Dorsolateral prefrontal cortex (tissue), 120 donors: ENCODE measurements at regions of chr10 and their contacts with region 1.

Region 1: DNA sequence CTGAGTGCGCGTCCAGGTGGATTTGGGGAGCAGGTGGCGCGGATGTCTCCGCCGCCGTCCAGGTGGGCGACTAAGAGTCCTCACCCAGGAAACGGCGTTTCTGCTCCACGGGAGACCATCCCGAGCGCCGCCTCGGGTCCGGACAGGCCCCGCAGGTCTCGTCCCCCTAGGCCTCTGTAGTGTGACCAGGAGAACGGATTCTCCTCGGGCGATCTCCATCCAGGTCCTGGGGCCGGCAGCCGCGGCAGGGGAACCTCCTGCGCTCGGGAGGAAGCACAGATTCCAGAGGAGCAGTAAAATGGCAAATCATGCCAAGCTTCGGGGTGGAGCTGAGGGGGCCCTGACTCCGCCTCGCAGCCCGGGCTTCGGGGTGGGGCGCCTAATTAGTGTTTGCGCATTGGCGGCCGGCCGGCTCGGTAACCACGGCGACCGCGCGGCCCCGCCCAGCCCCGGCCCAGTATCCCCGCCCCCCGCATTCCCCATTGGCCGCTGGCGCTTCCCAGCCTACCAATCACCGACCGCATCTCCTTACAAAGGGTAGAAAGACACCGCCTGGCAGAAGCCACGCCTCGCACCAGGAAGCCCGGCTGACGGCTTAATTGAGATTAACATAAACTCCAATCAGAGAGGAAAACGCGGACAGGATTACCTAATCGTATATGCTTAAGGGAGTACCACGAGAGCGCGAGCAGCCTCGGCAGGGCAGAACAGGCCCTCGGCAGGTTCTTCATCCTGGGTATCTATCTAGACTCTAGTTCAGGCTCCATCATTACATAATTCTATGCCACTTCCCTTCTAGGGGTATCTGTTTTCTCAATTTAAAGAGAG is 168.6 kb downstream of the ARHGAP12 start:
- DNase-seq: peak; percentile 92 to 99 (median 97)
- H3K4me3 ChIP-seq: peak overlapping the region; percentile 71 to 99 (median 90)
- H3K27ac ChIP-seq: peak overlapping the region; percentile 72 to 98 (median 94)
- H3K27me3 ChIP-seq: no peaks in the 10 kb centered on the region
- CTCF ChIP-seq: peak in 6 of 56 donors; percentile 9 to 33 (median 18)

Region 2: DNA sequence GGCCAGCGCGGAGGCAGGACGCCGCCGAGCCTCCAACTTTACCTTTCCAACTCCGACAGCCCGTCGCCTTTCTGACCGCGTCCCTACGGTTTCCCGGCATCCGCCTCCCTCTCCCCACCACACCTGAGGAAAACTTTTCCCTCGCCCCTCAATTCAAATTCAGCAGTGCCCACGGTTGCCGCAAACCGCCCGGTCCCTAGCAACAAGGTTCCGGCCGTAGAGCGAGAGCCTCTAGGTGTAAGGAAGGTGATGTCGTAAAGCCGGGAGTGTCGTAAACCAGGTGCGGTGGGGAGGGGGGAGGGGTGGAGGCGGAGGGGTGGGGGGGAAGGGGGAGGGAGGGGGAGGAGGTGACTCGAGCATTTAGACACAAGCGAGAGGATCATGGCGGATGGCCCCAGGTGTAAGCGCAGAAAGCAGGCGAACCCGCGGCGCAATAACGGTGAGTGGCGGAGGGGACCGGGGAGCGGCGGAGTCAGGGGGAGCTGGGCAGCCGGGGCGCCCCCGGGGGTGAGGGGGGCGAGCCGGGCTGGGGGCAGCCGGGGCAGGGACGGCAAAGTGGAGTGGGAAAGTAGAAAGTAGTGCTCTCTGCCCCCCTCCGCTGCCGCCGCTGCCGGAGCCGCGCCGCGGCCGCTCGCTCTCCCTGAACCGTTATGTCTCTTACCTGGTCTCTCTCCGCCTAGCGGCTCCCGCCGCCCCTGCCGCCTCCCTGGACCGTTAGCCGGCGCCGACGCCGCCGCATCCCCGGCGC is 441.0 kb before region 1 on chr10 and contains the start of gene ZEB1:
- intact Hi-C with region 1: loop called in 1 of 2 experiments (anchors 5 kb)
- DNase-seq: peak; percentile 24 to 85 (median 60)
- H3K4me3 ChIP-seq: peak within 1 kb of the TSS; percentile 53 to 94 (median 81)
- H3K27ac ChIP-seq: peak within 1 kb of the TSS in 58 of 59 donors; percentile 48 to 96 (median 90)
- H3K27me3 ChIP-seq: peaks cover 0 to 39% (median 5%) of the 10 kb centered on the region in 45 donors
- CTCF ChIP-seq: peak in 34 of 56 donors; percentile 11 to 47 (median 30)
- total RNA-seq, gene ZEB1: 53.6 to 139 (median 89.0) TPM

Region 3: DNA sequence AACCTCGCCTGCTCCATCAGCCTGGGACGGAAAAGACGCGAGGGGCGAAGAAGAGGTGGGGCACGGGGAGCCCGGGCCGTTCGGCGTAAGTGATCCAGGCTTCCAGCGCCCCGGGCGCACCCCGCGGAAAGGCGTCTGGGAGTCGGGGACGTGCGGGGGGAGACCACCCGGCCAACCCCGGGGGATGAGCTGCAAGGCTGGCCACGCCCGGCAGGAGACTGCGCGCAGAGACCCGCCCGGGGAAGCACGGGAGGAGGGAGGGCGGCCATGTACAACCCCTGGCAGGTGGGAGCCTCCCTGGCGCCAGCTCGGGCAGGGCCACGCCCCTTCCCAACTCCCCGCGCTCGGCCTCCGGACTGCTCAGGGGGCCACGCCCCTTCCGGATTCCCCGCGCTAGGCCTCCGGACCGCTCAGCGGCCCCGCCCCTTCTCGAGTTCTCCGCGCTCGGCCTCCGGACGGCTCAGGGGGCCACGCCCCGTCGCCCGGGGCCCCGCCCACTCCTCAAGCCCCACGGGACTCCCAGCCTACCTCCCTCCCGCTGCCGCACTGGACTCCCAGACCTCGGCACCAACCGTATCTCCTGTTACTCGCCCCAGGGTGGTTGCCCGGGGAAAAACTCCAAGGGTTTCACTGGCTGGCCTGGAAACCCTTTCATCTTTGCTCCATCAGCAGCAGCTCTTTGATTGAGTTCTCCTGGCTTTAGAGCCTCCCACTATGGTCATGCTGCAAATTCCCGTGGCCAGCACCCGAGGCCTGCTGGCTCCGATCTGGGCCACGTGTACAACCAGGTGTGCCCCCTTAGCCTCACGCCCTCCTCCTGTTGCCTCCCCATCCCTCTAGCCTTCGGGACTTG is 156.6 kb before region 1 on chr10:
- intact Hi-C with region 1: loop called (anchors 5 to 10 kb)
- DNase-seq: peak; percentile 28 to 89 (median 74)
- H3K4me3 ChIP-seq: peak overlapping the region; percentile 41 to 97 (median 79)
- H3K27ac ChIP-seq: peak overlapping the region in 56 of 59 donors; percentile 3 to 86 (median 72)
- H3K27me3 ChIP-seq: no peaks in the 10 kb centered on the region
- CTCF ChIP-seq: peak in 3 of 56 donors; percentile 14 to 19 (median 16)